H1 (cell line): ENCODE measurements at regions of chr15 and their contacts with region 1.

Region 1: DNA sequence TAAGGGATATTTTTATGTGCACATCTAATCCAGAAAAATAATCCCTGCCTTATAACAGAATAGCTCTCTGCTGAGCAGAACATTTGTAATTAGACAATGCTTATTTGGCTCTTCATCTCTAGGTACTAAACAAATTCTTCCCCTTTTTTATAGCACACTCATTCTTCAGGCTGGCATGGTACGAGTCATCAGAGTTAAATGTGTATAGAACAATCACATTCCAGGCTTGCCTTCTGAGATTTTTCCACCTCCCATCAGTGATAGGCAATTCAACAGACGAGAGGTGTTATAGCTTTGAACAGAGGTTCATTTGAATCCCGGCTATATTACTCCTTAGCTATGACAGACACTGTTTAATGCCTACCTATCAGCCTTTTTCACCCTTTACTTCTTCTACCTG is 21.4 kb upstream of the SPPL2A start:
- DNase-seq: no peak
- H3K4me3 ChIP-seq: no peak overlapping the region
- H3K27ac ChIP-seq: no peak overlapping the region
- H3K4me1 ChIP-seq: no peaks in the 10 kb centered on the region; a peak in 1 of 7 replicates
- H3K27me3 ChIP-seq: no peaks in the 10 kb centered on the region
- CTCF ChIP-seq: no peak
- EP300 ChIP-seq: no peak
- POLR2A ChIP-seq: no peak
- RAD21 ChIP-seq: no peak

Region 2: DNA sequence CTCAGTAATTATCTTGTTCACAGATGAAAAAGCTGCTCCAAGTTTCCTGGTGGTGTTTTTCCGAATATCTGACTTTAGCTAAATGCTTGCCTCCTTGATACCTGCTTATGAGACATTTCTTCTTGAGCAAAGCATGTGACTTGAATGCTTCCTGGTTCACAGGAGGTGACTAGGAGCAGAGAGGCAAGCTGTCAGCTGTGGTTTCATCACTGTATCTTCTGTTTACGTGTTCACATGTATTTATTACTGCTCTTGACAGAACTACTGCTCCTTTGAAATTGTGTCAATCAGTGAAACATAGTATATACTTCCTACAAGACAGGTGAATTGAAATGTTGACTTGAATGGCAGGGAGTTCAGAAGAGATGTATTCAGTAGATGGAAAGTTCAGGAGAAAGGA is 12.4 kb before region 1 on chr15:
- CTCF ChIA-PET with region 1: interaction called, 12 read pairs
- POLR2A ChIA-PET with region 1: no interaction called
- DNase-seq: no peak
- H3K4me3 ChIP-seq: no peak overlapping the region
- H3K27ac ChIP-seq: no peak overlapping the region
- H3K4me1 ChIP-seq: no peaks in the 10 kb centered on the region
- H3K27me3 ChIP-seq: no peaks in the 10 kb centered on the region
- CTCF ChIP-seq: no peak
- EP300 ChIP-seq: no peak
- POLR2A ChIP-seq: no peak
- RAD21 ChIP-seq: no peak